ENCODE measurements at regions of chr2 and their contacts with region 1.

Region 1: DNA sequence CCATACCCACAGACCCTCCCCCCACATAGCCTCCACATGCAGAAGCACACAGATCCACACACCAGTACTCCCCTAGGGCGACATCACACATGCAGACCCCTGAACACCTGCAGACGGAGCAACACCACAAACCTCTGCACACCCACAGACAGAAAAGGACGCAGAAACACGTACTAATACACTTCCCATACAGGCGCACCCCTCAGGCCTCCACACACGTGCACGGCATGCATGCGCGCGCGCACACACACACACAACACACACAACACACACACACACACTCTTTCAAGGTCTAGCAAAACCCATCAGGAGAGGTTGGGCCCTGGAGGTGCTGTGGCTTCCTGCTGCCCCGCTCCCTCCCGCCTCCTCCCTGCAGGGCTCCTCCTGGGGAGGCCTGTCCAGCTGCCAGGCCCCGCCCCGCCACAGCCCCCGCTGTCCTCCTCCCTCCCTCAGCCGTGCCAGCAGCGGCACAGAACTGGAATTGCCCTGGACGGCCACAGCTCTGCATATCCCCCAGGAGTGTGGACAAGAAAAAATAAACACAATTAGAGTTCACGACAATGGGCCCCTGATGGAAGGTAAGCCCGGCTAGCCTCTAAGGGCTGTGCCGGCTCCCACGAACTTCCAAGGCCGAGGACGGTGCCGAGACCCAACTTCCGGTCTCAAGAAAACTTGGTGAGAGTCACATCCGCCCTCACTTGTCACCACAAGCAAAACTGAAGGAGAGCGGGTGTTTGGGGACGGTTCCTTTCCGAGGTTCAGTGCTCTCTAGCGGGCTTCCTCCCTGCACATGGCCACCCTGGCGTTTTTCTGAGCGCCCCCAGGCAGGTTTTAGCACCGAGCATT is 6.8 kb downstream of the ZFP36L2 start:
- DNase-seq: peak; percentile 77
- ATAC-seq: peak; percentile 6
- H3K4me3 Mint-ChIP-seq: peak overlapping the region; percentile 74
- H3K27ac Mint-ChIP-seq: peak overlapping the region; percentile 99
- H3K4me1 Mint-ChIP-seq: peaks cover 74% of the 10 kb centered on the region
- H3K27me3 Mint-ChIP-seq: no peaks in the 10 kb centered on the region
- CTCF ChIP-seq: no peak

Region 2: GRCh38 chr2:43010438-43011157 is 209.0 kb before region 1 on chr2:
- CTCF ChIA-PET with region 1: no interaction called
- POLR2A ChIA-PET with region 1: no interaction called
- DNase-seq: no peak
- ATAC-seq: no peak
- H3K4me3 Mint-ChIP-seq: no peak overlapping the region
- H3K27ac Mint-ChIP-seq: no peak overlapping the region
- H3K4me1 Mint-ChIP-seq: peaks cover 16% of the 10 kb centered on the region
- H3K27me3 Mint-ChIP-seq: no peaks in the 10 kb centered on the region
- CTCF ChIP-seq: no peak

Region 3: DNA sequence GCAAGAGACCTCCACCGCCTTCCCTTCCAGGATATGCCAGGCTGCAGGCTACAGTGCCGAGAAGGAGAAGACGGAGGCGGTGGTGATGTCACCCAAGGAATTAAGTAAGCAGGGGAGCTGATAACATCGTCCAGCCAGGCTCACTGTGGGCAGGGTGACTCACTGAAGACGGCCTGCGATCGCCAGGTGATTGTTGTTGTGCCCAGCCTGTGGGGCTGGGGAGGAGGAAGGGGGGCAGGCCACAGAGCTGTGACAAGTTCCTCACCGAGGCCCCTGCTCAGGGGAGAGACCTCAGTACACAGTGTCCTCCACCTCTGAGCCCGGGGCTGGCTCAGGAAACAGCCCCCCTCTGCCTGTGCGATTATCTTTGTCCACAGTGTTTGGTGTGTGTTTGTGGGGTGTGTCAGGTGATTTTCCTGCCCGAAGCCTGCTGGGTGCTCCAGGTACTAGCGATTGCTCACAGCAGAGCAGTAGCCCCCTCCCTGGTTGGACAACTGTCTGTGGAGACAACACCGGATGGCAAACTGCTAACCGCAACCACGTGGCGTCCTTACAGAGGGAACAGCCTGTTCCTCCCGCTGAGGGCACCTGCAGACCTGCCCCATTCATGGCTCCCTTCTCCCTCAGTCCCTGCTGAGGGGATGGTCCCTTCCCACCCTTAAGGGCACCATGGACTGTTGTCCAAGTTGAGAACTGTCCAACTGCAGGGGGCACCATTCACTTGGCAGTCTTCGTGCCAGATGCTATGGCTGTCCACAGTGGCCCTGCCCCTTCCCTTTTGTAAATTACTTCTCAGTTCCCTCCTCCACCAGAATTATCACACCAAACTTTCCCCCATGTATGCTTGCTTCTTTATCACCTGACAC is 88.3 kb before region 1 on chr2:
- CTCF ChIA-PET with region 1: interaction called, 12 read pairs
- POLR2A ChIA-PET with region 1: no interaction called
- DNase-seq: peak; percentile 62
- ATAC-seq: peak; percentile 26
- H3K4me3 Mint-ChIP-seq: no peak overlapping the region
- H3K27ac Mint-ChIP-seq: no peak overlapping the region
- H3K4me1 Mint-ChIP-seq: peaks cover 35% of the 10 kb centered on the region
- H3K27me3 Mint-ChIP-seq: no peaks in the 10 kb centered on the region; the same call in 1 of the 2 replicates
- CTCF ChIP-seq: no peak

Region 4: GRCh38 chr2:43178602-43179542 is 40.7 kb before region 1 on chr2:
- CTCF ChIA-PET with region 1: interaction called, 15 read pairs
- POLR2A ChIA-PET with region 1: interaction called, 10 read pairs
- DNase-seq: peak; percentile 73
- ATAC-seq: peak; percentile 72
- H3K4me3 Mint-ChIP-seq: peak overlapping the region; percentile 35
- H3K27ac Mint-ChIP-seq: peak overlapping the region; percentile 99
- H3K4me1 Mint-ChIP-seq: peaks cover 53% of the 10 kb centered on the region
- H3K27me3 Mint-ChIP-seq: peaks cover 6% of the 10 kb centered on the region
- CTCF ChIP-seq: no peak

Region 5: DNA sequence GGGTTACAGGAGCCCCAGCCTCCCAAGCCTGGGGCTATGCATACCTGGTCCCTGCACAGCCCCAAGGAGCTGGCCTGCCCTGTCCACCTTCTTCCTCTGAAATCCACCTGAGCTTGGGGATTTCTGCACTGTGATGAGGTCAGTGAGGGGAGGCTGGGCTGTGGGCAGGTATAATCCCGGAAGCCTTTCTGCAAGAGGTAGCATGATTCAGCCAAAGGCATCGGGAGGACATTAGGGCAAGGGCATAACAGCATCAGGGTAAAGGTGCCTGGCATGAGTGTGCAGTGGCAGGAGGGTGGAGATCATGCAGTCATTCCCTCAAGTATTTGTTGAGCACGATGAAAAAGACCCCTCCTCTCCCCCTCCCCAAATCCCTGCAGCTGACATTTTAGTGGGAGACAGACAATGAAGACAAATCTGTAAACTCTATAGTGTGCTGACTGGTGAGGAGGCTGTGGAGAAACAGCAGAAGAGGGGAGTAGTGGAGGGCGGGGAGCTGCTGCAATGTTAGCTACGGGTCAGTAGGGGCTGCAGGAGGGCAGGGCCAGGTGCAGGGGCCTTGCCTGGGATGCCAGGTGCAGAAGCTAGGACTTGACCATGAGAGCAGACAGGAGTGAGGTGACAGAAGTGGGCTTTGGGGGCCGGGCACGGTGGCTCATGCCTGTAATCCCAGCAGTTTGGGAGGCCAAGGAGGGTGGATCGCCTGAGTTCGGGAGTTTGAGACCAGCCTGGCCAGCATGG is 11.9 kb before region 1 on chr2:
- CTCF ChIA-PET with region 1: interaction called, 29 read pairs
- POLR2A ChIA-PET with region 1: no interaction called
- DNase-seq: peak; percentile 59
- ATAC-seq: peak; percentile 94
- H3K4me3 Mint-ChIP-seq: no peak overlapping the region
- H3K27ac Mint-ChIP-seq: peak overlapping the region; percentile 9; the same call in 1 of the 2 replicates
- H3K4me1 Mint-ChIP-seq: peaks cover 19% of the 10 kb centered on the region
- H3K27me3 Mint-ChIP-seq: no peaks in the 10 kb centered on the region
- CTCF ChIP-seq: no peak

Region 6: DNA sequence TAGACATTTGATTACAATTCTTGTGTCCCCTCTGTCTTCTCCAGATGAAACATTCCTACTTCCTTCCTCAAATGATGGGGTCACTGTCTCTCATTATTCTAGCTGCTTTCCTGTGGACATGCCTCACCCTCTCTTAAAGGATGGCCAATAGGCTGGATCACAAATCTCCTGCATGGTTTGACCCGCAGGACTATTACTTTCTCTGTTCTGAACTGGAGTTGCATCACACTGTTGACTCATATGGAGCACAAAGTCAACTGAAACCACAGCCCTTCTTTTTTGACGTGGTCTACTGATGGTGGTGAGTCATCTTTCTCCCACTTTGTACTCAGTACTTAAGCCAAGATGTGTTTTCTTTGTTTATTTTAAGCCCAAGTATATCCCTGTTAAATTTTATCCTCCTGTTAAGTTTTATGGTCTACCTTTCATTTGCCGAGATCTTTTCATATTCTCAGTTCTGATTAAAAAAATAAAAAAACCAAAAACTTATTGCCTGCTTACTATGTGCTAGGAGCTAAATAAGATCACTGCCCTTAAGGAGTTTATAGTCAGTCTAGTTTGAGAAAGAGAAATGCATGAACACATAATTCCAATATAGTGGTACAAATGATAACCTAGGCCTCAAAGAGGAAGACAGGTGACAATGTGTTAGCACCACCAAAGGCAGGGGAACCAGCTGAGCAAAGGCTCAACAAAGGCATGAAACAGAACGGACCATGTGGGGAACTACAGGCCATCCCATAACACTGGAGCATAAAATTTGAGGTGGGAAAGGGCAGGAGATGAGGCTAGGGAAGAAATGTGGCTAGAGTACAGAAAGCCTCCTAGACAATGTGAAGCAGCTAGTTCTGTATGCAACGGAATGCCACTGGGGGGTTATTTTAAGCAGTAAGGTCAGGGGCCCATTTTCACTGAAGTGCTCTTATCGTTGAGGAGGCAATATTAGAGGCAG is 74.4 kb after region 1 on chr2:
- CTCF ChIA-PET with region 1: no interaction called
- POLR2A ChIA-PET with region 1: no interaction called
- DNase-seq: no peak
- ATAC-seq: no peak
- H3K4me3 Mint-ChIP-seq: no peak overlapping the region
- H3K27ac Mint-ChIP-seq: no peak overlapping the region
- H3K4me1 Mint-ChIP-seq: no peaks in the 10 kb centered on the region
- H3K27me3 Mint-ChIP-seq: no peaks in the 10 kb centered on the region
- CTCF ChIP-seq: no peak